ENCODE measurements at regions of chr4 and their contacts with region 1.

Region 1: DNA sequence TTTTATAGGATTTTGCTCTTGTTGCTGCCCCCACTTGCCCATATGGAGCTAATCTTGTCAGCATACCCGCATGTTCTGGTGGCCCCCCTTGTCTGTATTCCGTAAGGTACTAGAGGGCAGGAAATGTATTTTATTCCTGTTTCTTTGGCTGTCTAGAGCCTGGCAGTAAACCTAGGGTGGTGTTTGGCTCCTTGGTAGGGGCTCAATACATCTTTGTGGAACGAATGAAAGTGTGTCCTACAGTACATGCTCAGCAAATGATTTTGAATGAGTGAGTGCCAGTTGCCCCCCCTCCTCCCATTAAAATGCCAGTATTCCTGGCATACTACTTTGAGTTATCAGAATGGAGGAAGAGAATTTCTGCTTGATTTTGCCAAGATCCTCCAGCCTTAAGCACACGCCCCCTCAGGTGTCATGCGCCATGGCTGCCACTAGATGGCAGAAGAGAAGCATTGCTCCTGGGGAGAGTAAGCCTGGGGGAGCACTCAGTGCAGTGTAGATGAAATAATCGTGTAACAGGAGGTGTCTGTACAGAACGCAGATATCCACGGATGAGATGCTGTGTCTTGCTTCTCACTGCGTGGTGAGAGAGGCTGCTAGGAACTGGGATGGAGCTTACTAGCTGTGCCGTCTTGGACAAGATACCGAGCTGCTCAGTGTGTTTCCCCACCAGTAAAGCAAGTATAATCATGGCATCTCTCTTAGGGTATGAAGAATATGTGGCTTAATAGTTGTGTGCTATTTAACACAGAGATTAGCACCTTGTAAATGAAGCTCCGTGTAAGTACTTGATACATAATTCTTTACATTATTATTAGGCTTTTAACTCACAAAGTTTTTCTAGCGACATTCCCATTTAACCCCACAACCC is 17.2 kb upstream of the RNF212 start:
- DNase-seq: peak; percentile 72 to 92
- H3K4me3 ChIP-seq: no peak overlapping the region
- H3K27ac ChIP-seq: no peak overlapping the region
- H3K4me1 ChIP-seq: peaks cover 0 to 11% (median 2%) of the 10 kb centered on the region in 4 donors
- H3K27me3 ChIP-seq: peaks cover 0 to 10% (median 0%) of the 10 kb centered on the region in 3 donors
- CTCF ChIP-seq: peak in 6 of 7 experiments; percentile 81 to 100 (median 98)
- EP300 ChIP-seq: no peak
- POLR2A ChIP-seq: no peak

Region 2: GRCh38 chr4:1260418-1261106 is 130.0 kb after region 1 on chr4:
- intact Hi-C with region 1: loop called (anchors 10 kb)
- DNase-seq: no peak
- H3K4me3 ChIP-seq: no peak overlapping the region
- H3K27ac ChIP-seq: no peak overlapping the region
- H3K4me1 ChIP-seq: no peaks in the 10 kb centered on the region
- H3K27me3 ChIP-seq: no peaks in the 10 kb centered on the region
- CTCF ChIP-seq: no peak
- EP300 ChIP-seq: no peak
- POLR2A ChIP-seq: no peak

Region 3: GRCh38 chr4:1351854-1352633 is 221.5 kb after region 1 on chr4:
- intact Hi-C with region 1: loop called (anchors 10 kb)
- DNase-seq: peak; percentile 93 to 94
- H3K4me3 ChIP-seq: no peak overlapping the region
- H3K27ac ChIP-seq: peak overlapping the region in 2 of 5 donors; percentile 52 to 60
- H3K4me1 ChIP-seq: peaks cover 15 to 46% (median 36%) of the 10 kb centered on the region in 4 donors
- H3K27me3 ChIP-seq: no peaks in the 10 kb centered on the region
- CTCF ChIP-seq: peak in 5 of 7 experiments; percentile 75 to 93 (median 87)
- EP300 ChIP-seq: no peak
- POLR2A ChIP-seq: no peak

Region 4: GRCh38 chr4:2041234-2042130 is 910.9 kb after region 1 on chr4:
- intact Hi-C with region 1: no loop called
- DNase-seq: peak; percentile 80 to 91
- H3K4me3 ChIP-seq: peak overlapping the region; percentile 65 to 85 (median 71)
- H3K27ac ChIP-seq: peak overlapping the region in 2 of 5 donors; percentile 47 to 69
- H3K4me1 ChIP-seq: peaks cover 24 to 29% (median 29%) of the 10 kb centered on the region in 4 donors
- H3K27me3 ChIP-seq: peaks cover 14 to 71% (median 31%) of the 10 kb centered on the region in 3 donors
- CTCF ChIP-seq: no peak
- EP300 ChIP-seq: no peak
- POLR2A ChIP-seq: no peak